Activated naive CD4-positive, alpha-beta T cell treated with anti-CD3 and anti-CD28 coated beads for 36 hours (primary cell): ENCODE measurements at regions of chr15 and their contacts with region 1.

Region 1: DNA sequence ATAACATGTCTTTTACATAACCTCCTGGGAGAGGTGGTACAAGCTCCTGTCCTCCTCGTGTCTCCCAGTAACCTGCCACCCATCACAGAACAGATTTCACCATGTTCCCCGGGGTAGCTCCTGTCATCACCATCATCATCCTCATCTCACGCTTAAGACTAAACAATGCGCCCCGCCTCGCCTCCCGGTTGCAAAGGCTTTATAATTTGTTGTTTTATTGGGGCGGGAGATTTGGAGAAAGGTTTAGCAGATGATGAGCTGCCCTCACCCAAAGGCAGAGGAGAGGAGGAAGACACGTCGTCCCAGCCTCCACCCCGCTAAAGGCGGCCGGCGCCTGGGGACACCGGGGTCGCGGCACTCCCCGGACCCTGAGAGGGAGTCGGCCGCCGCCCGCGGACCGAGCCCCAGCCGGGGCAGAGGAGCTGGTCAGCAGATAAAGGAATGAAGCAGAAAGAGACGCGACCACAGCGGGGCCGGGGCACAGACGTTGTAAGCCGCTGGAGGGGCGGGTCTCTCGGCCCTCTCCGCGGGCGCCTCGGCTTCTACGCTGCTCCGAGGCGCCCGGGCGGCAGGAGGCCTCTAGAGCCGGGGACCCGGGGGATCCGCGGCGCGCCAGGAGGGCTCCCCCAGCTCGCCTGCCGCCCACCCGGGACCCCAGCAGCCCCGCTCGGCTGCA is 589 bp downstream of the HERC1 start:
- DNase-seq: peak; percentile 45
- H3K4me3 Mint-ChIP-seq: peak overlapping the region; percentile 98
- H3K27ac Mint-ChIP-seq: peak overlapping the region; percentile 72
- H3K4me1 Mint-ChIP-seq: peaks cover 49% of the 10 kb centered on the region
- H3K27me3 Mint-ChIP-seq: no peaks in the 10 kb centered on the region

Region 2: GRCh38 chr15:63539521-63539920 is 293.6 kb before region 1 on chr15:
- CTCF ChIA-PET with region 1: no interaction called
- intact Hi-C with region 1: no loop called
- DNase-seq: no peak
- H3K4me3 Mint-ChIP-seq: no peak overlapping the region
- H3K27ac Mint-ChIP-seq: no peak overlapping the region
- H3K4me1 Mint-ChIP-seq: peaks cover 64% of the 10 kb centered on the region
- H3K27me3 Mint-ChIP-seq: no peaks in the 10 kb centered on the region

Region 3: DNA sequence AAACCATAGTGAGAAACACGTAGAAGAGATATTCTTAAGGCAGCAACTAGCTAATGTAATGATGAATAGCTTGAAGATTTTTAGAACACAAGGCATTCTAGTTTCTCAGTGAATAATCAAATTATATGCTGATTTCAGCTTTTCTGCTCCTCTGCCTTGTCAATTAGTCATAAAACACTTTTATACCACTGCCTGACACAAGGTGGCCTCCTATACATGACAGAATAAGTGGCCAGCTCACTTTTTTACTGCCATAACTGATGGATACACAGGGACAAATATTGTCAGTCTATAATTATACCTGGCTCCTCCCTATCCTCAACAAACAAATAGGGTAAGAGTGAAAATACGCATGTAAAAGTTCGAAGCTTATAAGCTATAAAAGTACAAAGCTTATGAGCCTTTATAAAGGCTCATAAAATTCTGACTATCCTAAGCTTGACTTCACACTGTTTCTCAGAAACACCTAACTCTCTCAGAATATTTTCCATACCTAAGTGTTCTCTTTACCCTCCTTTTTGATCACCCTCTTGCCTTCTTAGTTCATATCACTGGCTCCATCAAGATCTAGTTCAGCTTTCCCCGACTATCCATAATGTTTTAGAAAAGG is 81.0 kb before region 1 on chr15:
- CTCF ChIA-PET with region 1: interaction called, 4 read pairs
- intact Hi-C with region 1: loop called (anchors 2 kb)
- DNase-seq: peak; percentile 60
- H3K4me3 Mint-ChIP-seq: no peak overlapping the region
- H3K27ac Mint-ChIP-seq: no peak overlapping the region
- H3K4me1 Mint-ChIP-seq: no peaks in the 10 kb centered on the region
- H3K27me3 Mint-ChIP-seq: no peaks in the 10 kb centered on the region

Region 4: DNA sequence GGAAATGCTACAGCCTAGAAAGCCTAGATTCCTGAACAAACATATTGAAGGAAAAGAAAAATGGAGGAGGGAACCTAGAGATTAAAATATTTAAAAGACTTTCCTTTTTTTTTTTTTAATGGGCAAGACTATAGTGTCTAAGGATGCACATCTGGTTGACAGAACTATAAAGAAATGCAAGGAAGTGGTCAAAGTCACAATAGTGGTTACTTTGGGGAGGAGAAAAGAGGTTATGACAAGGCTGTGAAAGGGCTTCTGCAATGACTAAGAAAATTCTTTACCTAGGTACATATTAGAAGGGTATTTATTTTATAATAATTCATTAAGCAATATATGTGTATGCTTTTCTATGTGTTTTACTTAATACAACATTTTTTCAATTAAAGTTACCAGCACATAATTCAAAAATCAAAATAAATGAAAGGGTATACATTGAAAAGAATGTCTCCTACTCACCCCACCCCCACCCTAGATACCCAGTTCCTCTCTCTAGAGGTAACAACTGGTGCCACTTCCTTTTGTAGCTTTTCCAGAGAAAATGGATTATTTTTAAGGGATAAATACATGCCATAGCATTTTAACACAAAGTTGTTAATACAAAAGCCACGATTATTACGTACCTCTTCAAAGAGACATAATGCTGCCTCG is 69.6 kb before region 1 on chr15:
- CTCF ChIA-PET with region 1: no interaction called
- intact Hi-C with region 1: no loop called
- DNase-seq: no peak
- H3K4me3 Mint-ChIP-seq: no peak overlapping the region
- H3K27ac Mint-ChIP-seq: no peak overlapping the region
- H3K4me1 Mint-ChIP-seq: peaks cover 52% of the 10 kb centered on the region
- H3K27me3 Mint-ChIP-seq: no peaks in the 10 kb centered on the region

Region 5: GRCh38 chr15:63791228-63791627 is 41.9 kb before region 1 on chr15:
- CTCF ChIA-PET with region 1: no interaction called
- intact Hi-C with region 1: no loop called
- DNase-seq: no peak
- H3K4me3 Mint-ChIP-seq: no peak overlapping the region
- H3K27ac Mint-ChIP-seq: no peak overlapping the region
- H3K4me1 Mint-ChIP-seq: peaks cover 30% of the 10 kb centered on the region
- H3K27me3 Mint-ChIP-seq: no peaks in the 10 kb centered on the region

Region 6: DNA sequence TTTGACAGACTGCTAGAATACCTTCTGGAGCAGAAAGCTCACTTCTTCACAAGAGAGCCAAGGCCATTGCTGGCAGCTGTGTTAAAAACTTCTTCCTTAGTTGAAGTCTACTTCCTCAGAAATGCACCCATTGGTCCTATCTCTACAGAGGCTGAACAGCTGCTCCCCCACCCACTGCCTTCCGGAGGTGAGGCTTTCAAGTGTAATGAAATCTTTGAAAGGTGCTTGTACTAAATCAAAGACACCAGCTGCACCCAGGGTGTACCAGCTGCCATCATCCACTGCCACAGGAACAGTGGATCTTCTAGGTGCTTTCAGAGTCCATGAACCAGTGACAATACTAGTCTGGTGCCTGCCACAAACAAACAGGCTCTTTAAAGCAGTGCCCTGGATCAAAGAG is 27.0 kb after region 1 on chr15:
- CTCF ChIA-PET with region 1: interaction called, 3 read pairs
- intact Hi-C with region 1: loop called (anchors 1 kb)
- DNase-seq: peak; percentile 82
- H3K4me3 Mint-ChIP-seq: peak overlapping the region; percentile 32
- H3K27ac Mint-ChIP-seq: peak overlapping the region; percentile 89
- H3K4me1 Mint-ChIP-seq: peaks cover 57% of the 10 kb centered on the region
- H3K27me3 Mint-ChIP-seq: no peaks in the 10 kb centered on the region

Region 7: DNA sequence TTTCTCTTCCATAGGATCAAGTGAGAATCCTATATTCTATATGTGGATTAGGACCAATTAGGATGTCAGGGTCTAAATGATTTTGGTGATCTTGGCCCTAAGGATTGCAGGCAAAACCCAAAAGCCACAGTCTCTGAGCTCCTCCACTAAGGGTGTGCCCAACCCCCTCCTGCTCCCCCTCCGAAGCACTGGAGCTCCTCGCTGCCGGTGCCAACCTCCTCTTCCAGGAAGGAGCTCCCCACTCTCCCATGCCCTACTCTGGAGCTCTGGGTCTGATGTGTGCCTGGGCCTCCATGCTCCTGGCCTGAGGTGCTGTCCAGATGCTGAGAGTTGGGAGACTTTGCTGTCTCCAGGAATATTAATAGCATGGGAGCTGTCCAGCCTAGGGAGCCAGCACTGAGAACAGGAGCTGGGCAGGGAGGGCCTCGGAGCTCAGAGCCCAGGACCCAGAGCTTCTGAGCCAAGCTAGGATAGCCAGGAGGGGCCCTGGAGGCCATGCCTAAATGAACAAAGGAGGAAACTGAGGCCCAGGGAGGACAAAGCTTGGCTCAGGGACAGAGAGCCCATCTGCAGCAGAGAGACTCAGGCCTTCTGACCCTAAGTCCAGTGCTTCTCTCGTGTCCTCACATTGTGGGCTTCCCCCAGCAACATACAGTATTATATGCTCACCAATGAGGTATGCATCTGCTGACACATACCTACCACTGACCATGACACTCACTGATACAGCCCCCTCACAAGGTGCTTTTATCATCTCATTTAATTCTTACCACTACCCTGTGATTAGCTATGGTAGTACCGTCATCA is 37.4 kb after region 1 on chr15:
- CTCF ChIA-PET with region 1: no interaction called
- intact Hi-C with region 1: loop called (anchors 5 kb)
- DNase-seq: no peak
- H3K4me3 Mint-ChIP-seq: no peak overlapping the region
- H3K27ac Mint-ChIP-seq: peak overlapping the region; percentile 63
- H3K4me1 Mint-ChIP-seq: peaks cover 19% of the 10 kb centered on the region
- H3K27me3 Mint-ChIP-seq: no peaks in the 10 kb centered on the region

Region 8: DNA sequence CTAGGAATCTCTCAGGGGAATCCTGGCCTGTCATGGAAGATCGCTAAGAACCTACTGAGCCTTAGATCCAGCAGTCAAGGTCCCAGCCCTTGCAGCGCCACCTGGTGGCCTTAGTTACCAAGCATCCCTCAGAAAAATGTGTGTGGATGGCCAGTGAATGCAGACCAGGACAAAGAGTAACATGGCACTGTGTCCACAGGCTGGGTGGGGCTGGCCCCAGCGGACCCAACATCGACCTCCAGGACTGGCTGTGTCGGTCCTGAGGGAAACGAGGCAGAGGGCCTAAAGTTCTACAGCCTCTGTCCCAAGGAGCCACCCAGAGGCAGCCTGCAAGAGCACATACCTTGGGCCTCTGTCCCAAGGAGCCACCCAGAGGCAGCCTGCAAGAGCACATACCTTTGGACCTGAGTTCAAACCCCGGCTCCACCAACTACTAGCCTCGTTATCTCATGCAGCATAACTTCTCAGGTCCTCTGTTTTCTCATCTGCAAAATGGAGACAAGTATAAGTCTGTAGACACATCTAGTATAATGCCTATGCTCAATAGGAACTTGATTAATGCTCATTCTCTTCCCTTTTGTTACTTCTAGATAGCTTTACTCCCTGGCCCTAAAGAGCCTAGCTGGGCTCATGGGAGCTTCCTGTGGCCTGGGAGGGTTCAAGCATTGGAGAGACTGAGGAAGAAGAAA is 58.1 kb after region 1 on chr15:
- CTCF ChIA-PET with region 1: interaction called, 4 read pairs
- intact Hi-C with region 1: loop called (anchors 1 kb)
- DNase-seq: peak; percentile 86
- H3K4me3 Mint-ChIP-seq: no peak overlapping the region
- H3K27ac Mint-ChIP-seq: no peak overlapping the region
- H3K4me1 Mint-ChIP-seq: peaks cover 40% of the 10 kb centered on the region
- H3K27me3 Mint-ChIP-seq: no peaks in the 10 kb centered on the region

Region 9: DNA sequence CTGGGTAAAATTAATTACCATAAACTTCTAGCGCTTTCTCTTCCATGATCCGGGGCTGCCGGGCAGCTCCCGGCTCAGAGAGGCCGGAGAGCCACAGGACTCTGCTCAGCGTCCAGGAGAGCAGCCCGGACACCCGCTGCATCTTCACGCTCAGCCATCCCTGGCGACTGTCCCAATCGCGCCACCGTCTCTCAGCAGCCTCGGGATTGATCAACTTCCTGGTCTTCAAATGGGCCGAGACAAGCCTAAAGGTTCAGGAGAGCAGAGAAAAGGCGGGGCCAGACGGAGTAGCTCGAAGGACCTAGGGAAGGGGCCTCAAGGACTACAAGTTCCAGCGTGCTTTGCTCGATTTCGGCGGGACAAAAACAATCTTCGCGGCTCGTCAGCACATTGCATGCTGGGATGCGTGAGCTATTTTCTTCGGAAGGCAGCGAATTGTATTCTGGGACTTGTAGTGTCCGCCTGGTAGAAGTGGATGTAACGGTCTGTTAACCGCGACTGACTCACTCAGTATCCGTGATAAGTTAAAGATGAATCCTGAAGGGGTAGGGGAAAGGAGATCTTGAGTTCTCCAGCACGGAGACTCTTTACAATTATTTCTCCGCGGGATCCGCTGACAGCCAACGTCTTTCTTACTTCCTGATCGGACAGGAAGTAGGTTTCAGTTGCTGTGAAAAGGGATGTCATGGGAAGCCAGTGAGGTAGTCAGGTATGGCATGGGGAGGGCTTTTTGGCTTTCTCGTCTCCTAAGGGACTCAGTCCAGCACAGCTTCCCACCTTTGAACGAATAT is 260.7 kb after region 1 on chr15 and contains the start of gene CIAO2A:
- CTCF ChIA-PET with region 1: no interaction called
- intact Hi-C with region 1: loop called (anchors 1 kb)
- DNase-seq: peak; percentile 99
- H3K4me3 Mint-ChIP-seq: peak within 1 kb of the TSS; percentile 98
- H3K27ac Mint-ChIP-seq: peak within 1 kb of the TSS; percentile 97
- H3K4me1 Mint-ChIP-seq: peaks cover 62% of the 10 kb centered on the region
- H3K27me3 Mint-ChIP-seq: no peaks in the 10 kb centered on the region
- total RNA-seq, gene CIAO2A: 105 TPM

Region 10: DNA sequence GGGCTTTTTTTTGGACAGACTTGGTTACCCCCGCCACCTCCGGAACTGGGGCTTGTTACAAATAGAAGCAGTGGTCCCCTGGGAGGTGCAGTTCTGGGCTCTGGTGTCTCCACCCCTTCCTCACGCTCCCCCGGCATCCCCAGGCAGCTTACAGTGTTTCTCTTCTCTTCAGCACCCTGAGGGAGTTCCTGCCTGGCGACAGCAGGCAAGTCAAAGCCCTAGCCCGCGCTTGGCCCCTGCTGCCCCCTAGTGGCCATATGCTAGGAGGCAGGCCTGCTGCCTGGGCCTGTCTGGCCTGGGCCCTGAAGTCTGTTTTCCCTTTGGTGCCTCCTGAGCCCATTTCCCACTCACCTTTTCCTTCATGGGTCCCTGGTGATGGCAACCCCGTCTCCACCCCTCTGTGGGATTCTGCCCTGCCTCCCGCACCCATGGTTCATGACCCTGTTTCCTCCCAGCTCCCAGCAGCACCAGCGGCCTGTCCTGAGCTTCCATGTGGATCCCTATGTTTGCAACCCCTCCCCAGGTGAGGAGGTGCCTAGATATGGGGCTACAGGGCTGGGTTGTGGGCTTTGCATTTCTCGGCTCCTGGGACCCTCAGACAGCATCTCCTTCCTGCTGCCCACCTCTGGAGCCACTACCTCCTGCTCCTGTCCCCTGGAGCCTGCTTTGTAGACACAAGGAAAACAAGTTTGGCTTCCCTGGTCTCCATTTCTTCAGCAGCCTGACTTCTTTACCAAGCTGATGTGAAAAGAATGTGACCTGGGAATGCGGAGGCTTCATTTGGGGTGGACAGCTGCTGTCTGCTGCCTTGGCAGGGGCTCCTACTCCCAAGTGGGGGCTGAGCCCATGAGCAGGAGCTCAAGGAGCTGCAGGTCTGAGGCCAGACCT is 320.6 kb after region 1 on chr15:
- CTCF ChIA-PET with region 1: no interaction called
- intact Hi-C with region 1: loop called (anchors 10 kb)
- DNase-seq: peak; percentile 96
- H3K4me3 Mint-ChIP-seq: peak overlapping the region; percentile 50
- H3K27ac Mint-ChIP-seq: peak overlapping the region; percentile 67
- H3K4me1 Mint-ChIP-seq: peaks cover 26% of the 10 kb centered on the region
- H3K27me3 Mint-ChIP-seq: peaks cover 11% of the 10 kb centered on the region